Activated CD4-positive, alpha-beta memory T cell treated with anti-CD3 and anti-CD28 coated beads for 36 hours (primary cell): ENCODE measurements at regions of chr14 and their contacts with region 1.

Region 1: DNA sequence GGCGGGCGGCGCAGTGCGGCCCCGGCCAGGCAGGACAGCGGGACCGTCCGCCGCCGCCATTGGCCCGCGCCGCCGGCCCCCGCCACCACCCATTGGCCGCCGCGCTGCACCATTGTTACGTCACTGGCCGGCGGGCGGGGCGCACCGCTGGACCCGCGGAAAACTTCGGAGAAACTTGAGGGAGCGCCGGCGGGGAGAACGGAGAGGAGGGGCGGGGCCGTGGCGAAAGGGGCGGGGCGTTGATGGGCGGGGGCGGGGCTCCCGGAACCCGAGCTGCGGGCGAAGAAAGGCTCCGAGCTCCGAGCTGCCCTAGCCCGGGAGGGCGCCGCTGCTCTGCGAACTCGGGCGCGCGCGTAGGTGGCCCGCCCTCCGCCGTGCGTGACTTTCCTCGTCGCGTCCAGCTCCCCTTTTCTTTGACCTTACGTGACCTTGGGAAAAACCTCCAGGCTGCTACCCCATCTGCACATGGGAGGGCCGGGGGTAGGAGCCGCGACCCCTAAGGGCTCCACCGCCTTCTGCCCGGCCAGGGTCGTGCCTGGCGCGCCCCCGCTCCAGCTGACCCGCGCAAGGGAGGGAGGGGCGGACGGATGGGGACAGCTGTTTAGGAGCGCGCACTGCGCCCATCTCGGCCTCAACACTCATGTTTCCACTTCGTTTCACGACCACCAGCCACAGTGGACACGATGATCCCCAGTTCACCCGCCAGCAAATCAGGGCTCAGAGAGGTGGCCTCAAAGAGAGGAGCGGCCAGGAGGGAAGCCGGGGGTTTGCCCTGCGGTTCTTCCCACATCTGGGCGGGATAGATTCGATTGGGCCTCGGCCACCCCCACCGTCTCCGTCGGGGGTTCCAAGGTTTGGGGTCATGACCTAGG is at the start of gene ANKRD9:
- DNase-seq: peak; percentile 94
- H3K4me3 Mint-ChIP-seq: peak within 1 kb of the TSS; percentile 78
- H3K27ac Mint-ChIP-seq: peak within 1 kb of the TSS; percentile 54
- H3K4me1 Mint-ChIP-seq: peaks cover 10% of the 10 kb centered on the region
- H3K27me3 Mint-ChIP-seq: no peaks in the 10 kb centered on the region
- total RNA-seq, gene ANKRD9: 15.2 to 17.5 TPM

Region 2: GRCh38 chr14:102362545-102363181 is 147.3 kb before region 1 on chr14 and contains the starts of genes CINP and TECPR2:
- CTCF ChIA-PET with region 1: no interaction called
- POLR2A ChIA-PET with region 1: no interaction called
- intact Hi-C with region 1: loop called (anchors 10 kb)
- DNase-seq: peak; percentile 99
- H3K4me3 Mint-ChIP-seq: no peak within 1 kb of the TSS
- H3K27ac Mint-ChIP-seq: peak within 1 kb of the TSS; percentile 96
- H3K4me1 Mint-ChIP-seq: peaks cover 31% of the 10 kb centered on the region
- H3K27me3 Mint-ChIP-seq: no peaks in the 10 kb centered on the region
- total RNA-seq, gene CINP: 50.5 to 51.2 TPM
- total RNA-seq, gene TECPR2: 6.2 to 7.0 TPM

Region 3: DNA sequence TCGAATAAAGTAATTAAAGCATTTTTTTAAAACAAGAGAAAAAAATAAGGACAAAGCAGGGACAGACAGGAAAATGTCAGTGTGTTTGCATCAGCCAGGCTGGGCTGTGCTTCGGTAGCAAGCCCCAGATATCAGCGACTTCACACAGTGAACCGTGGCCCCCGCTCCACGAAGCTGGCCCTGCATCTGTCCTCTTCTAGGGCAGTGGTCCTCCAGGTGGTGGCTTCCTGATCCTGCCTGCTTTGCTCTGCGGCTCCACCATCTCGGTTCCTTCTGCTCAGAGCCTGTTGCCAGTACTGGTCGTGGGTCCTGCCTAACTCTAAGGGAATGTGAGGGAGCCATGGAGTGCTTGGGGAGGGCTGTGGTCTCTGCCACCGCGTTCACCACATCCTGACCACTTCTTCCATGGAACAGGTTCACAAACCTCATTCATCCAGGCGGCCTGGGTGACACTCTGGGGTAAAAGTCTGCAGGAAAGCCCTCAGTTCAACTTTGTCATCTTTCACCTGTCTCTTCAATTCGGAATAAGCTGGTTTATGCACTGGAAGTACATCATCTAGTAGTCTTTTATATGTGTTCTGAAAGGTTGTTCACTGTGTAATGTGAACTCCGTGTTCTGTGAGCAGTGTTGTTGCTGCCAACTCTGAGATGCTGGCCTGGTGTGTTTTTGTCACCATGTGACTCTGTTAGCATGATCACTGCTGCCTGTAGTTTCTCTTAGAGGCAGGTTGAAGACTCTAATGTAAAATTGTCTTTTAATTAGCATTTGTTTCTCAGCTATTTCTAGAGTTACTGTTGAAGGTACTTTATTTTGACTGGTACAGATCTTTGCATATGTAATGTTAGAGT is 48.3 kb before region 1 on chr14:
- CTCF ChIA-PET with region 1: no interaction called
- POLR2A ChIA-PET with region 1: no interaction called
- intact Hi-C with region 1: no loop called
- DNase-seq: no peak
- H3K4me3 Mint-ChIP-seq: no peak overlapping the region
- H3K27ac Mint-ChIP-seq: no peak overlapping the region
- H3K4me1 Mint-ChIP-seq: peaks cover 5% of the 10 kb centered on the region
- H3K27me3 Mint-ChIP-seq: no peaks in the 10 kb centered on the region

Region 4: GRCh38 chr14:102524466-102525218 is 14.7 kb after region 1 on chr14:
- CTCF ChIA-PET with region 1: interaction called, 18 read pairs
- POLR2A ChIA-PET with region 1: interaction called, 3 read pairs
- intact Hi-C with region 1: no loop called
- DNase-seq: peak; percentile 98
- H3K4me3 Mint-ChIP-seq: peak overlapping the region; percentile 68
- H3K27ac Mint-ChIP-seq: peak overlapping the region; percentile 26
- H3K4me1 Mint-ChIP-seq: peaks cover 28% of the 10 kb centered on the region
- H3K27me3 Mint-ChIP-seq: no peaks in the 10 kb centered on the region